ENCODE measurements at regions of chr3 and their contacts with region 1.

Region 1: GRCh38 chr3:71583566-71584449 is at the start of gene FOXP1:
- DNase-seq: peak; percentile 80
- H3K4me3 ChIP-seq: peak within 1 kb of the TSS; percentile 76 to 91 (median 84)
- H3K27ac ChIP-seq: peak within 1 kb of the TSS; percentile 78
- H3K4me1 ChIP-seq: peaks cover 41% of the 10 kb centered on the region
- H3K27me3 ChIP-seq: no peaks in the 10 kb centered on the region
- CTCF ChIP-seq: no peak
- POLR2A ChIP-seq: no peak
- total RNA-seq, gene FOXP1: 96.9 and 107 TPM in 2 replicates

Region 2: GRCh38 chr3:70716832-70717231 is 867.0 kb before region 1 on chr3:
- CTCF ChIA-PET with region 1: interaction called, 32 read pairs
- POLR2A ChIA-PET with region 1: no interaction called
- dilution Hi-C with region 1: no loop called
- intact Hi-C with region 1: loop called (anchors 2 kb)
- DNase-seq: peak; percentile 86
- H3K4me3 ChIP-seq: no peak overlapping the region
- H3K27ac ChIP-seq: no peak overlapping the region
- H3K4me1 ChIP-seq: peaks cover 5% of the 10 kb centered on the region
- H3K27me3 ChIP-seq: no peaks in the 10 kb centered on the region
- CTCF ChIP-seq: peak; percentile 17 to 46
- POLR2A ChIP-seq: no peak

Region 3: DNA sequence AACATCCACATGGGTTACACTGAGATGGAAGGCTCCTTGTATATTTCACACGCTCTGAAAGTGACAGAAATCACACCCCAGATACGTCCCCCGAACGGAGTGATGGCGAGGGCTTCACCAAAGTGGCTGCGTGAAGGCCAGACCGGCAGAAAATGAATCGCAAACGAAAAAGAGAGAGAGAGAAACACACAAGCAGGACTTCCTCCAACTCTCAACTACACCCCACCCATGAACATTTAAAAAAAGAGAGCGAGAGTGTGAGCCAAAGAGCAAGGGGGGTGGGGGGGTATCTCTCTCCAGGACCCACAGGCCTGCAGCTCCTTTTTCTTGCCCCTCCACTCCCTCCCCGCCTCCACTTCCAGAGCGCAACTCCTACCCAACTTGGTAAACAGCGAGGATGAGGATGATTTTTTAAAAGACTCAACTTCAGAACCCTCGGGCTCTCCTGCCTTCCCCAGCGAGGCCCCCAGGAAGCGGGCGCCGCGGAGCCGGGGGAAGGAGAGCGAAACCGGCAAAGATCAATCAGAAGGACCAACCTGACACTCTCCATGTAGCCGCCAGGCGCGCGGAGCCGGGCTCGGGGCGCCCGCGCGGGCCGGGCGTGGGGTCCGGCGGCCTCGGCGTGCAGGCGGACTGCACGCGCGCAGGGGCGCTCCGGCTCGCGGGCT is 519.4 kb before region 1 on chr3:
- CTCF ChIA-PET with region 1: interaction called, 7 read pairs
- POLR2A ChIA-PET with region 1: no interaction called
- dilution Hi-C with region 1: no loop called
- intact Hi-C with region 1: loop called (anchors 2 kb)
- DNase-seq: peak; percentile 76
- H3K4me3 ChIP-seq: peak overlapping the region; percentile 64 to 93 (median 84)
- H3K27ac ChIP-seq: peak overlapping the region; percentile 83
- H3K4me1 ChIP-seq: peaks cover 55% of the 10 kb centered on the region
- H3K27me3 ChIP-seq: no peaks in the 10 kb centered on the region
- CTCF ChIP-seq: no peak
- POLR2A ChIP-seq: peak; percentile 24

Region 4: DNA sequence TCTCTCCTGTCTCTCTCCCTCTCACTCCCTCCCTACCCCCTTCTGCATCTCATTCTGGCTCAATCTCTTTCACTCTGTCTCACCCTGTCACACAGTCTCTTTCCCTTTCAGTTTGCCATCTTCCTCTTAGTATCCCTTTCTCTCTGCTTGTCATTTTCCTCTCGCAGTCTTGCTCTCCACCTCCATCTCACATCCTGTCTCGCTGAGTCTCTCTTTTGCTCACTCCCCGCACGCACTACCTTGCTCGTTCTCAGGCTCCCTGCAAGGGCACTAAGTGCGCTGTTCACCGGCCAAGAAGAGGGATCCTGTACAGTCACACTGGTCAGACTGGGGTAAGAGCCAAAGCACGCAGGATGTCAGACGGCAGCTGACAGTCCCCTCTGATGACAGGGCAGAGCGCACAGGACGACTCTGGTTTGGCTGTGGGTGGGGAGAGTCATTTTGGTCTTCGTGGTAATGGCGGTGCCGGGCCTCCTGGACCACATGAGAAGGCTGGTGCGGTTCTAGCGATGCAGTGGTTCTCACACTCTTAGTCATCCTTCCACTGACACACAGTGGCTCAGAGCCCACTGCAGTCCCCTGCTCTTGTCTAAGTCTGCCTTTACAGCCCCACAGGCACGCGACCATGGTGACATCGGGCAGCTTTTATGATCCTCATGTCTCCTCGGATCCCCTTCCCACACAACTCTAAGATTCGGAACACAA is 357.1 kb before region 1 on chr3:
- CTCF ChIA-PET with region 1: no interaction called
- POLR2A ChIA-PET with region 1: no interaction called
- dilution Hi-C with region 1: no loop called
- intact Hi-C with region 1: loop called (anchors 5 kb)
- DNase-seq: no peak
- H3K4me3 ChIP-seq: no peak overlapping the region
- H3K27ac ChIP-seq: peak overlapping the region; percentile 66
- H3K4me1 ChIP-seq: peaks cover 24% of the 10 kb centered on the region
- H3K27me3 ChIP-seq: no peaks in the 10 kb centered on the region
- CTCF ChIP-seq: no peak
- POLR2A ChIP-seq: no peak

Region 5: GRCh38 chr3:71389911-71390573 is 193.8 kb before region 1 on chr3:
- CTCF ChIA-PET with region 1: interaction called, 9 read pairs
- POLR2A ChIA-PET with region 1: no interaction called
- dilution Hi-C with region 1: no loop called
- intact Hi-C with region 1: loop called (anchors 1 kb)
- DNase-seq: peak; percentile 95
- H3K4me3 ChIP-seq: peak overlapping the region in 1 of 3 experiments; percentile 29
- H3K27ac ChIP-seq: peak overlapping the region; percentile 88
- H3K4me1 ChIP-seq: peaks cover 41% of the 10 kb centered on the region
- H3K27me3 ChIP-seq: no peaks in the 10 kb centered on the region
- CTCF ChIP-seq: no peak
- POLR2A ChIP-seq: peak; percentile 37

Region 6: DNA sequence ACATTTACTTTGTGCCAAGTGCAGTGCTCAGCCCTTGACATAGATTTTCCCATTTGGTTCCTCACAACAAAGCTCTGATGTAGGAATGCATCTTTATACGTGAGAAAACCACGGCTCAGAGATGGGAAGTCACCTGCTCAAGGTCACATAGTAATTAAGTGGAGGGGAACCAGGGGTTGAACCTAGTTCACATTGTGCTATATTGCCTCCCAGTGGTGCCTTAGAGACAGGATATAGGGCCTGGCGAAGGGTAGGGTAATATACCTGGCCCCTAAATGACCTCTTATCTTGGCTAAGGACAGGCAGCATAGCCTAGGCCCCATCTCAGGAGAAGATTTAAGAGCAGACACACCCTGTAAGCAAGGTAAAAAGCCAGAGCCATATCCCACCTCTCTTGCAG is 71.8 kb before region 1 on chr3:
- CTCF ChIA-PET with region 1: interaction called, 25 read pairs
- POLR2A ChIA-PET with region 1: interaction called, 6 read pairs
- dilution Hi-C with region 1: no loop called
- intact Hi-C with region 1: loop called (anchors 1 kb)
- DNase-seq: no peak
- H3K4me3 ChIP-seq: no peak overlapping the region
- H3K27ac ChIP-seq: no peak overlapping the region
- H3K4me1 ChIP-seq: peaks cover 17% of the 10 kb centered on the region
- H3K27me3 ChIP-seq: no peaks in the 10 kb centered on the region
- CTCF ChIP-seq: no peak
- POLR2A ChIP-seq: no peak

Region 7: DNA sequence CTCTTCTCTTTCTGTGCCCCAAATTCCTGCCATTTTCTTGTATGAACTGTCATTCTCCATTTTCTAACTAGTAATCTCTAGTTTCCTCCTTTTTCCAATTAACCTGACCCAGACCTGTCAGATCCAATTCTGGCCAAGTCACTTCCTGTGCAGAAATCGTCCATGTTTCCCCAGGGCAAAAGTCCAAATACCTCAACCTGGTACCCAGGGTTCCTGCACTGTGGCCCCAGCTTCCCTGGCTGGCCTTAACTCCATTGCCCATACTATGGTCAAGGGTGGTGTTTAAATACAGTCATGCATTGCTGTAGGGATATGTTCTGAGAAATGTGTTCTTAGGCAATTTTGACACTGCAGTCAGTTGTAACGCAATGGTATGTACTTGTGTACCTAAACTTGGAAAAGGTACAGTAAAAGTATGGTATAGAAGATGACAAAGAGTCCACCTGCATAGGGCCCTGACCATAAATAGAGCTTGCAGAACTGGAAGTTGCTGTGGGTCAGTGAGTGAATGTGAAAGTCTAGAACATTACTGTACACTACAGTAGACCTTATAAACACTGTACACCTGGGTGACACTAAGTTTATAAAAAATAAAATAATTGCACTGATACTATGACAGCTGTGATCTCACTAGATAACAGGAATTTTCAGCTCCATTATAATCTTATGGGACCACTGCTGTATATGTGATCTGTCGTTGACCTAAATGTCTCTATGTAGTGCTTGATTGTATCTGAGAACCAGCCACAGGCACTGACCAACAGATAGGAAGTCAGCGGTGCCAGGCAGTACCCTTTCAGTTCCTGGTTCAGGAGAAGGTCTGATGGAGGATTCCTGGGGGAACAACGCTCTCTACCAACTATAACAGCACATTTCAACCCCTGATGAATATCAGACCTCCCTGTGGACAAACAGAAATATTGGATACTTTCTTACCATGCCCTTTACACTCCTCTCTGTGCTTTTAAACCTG is 537.3 kb after region 1 on chr3:
- CTCF ChIA-PET with region 1: no interaction called
- POLR2A ChIA-PET with region 1: no interaction called
- dilution Hi-C with region 1: no loop called
- intact Hi-C with region 1: no loop called
- DNase-seq: no peak
- H3K4me3 ChIP-seq: no peak overlapping the region
- H3K27ac ChIP-seq: no peak overlapping the region
- H3K4me1 ChIP-seq: peaks cover 3% of the 10 kb centered on the region
- H3K27me3 ChIP-seq: peaks cover under 1 to 3% of the 10 kb centered on the region in 2 experiments
- CTCF ChIP-seq: no peak
- POLR2A ChIP-seq: no peak

Measured in endothelial cell of umbilical vein (primary cell).